CD4-positive, alpha-beta T cell (primary cell): ENCODE measurements at regions of chr17 and their contacts with region 1.

Region 1: DNA sequence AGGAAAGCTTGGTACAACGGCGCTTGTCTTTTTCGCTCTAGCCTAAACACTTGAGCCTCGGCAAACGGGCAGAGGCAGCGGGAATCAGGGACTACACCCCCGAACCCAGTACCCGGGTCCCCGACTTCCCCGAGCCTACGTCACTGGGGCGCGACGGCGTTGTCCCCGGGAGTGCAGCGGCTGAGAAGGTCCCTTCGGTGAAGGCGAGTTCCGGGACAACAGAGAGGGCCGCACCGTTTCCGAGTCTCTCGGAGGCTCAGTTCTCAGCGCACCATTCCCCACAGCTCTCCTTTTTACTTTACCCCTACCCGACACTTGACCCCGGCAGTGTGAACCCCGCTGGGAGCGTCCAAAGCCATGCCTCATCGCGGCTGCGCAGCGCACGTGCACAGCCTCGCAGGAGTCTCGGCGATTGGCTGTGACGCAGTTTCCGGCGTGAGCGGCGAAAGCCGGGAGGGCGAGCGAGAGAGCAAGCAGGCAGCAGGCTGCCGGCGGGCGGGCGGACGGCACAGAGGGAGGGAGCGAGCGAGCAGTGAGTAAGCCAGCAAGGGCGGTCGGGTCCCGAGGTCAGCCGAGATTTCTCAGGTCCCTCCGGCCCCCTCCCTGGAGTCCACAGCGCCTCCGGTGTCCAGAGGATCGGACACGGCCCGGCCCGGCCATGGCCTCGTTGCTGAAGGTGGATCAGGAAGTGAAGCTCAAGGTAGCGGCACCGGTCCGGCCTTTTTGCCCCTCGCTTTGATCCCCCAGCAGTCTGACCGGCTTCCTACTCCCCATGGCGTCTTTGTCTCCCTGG is at the start of gene PSME3:
- DNase-seq: peak; percentile 76 to 95 (median 86)
- ATAC-seq: peak; percentile 87
- H3K4me3 ChIP-seq: peak within 1 kb of the TSS; percentile 93
- H3K4me3 Mint-ChIP-seq: peak within 1 kb of the TSS; percentile 95
- H3K27ac ChIP-seq: peak within 1 kb of the TSS; percentile 86 to 88
- H3K27ac Mint-ChIP-seq: peak within 1 kb of the TSS; percentile 98
- H3K4me1 ChIP-seq: peaks cover 24% of the 10 kb centered on the region
- H3K4me1 Mint-ChIP-seq: peaks cover 27% of the 10 kb centered on the region
- H3K27me3 ChIP-seq: no peaks in the 10 kb centered on the region
- H3K27me3 Mint-ChIP-seq: no peaks in the 10 kb centered on the region
- CTCF ChIP-seq: no peak
- total RNA-seq, gene PSME3: 62.1 to 62.5 TPM

Region 2: DNA sequence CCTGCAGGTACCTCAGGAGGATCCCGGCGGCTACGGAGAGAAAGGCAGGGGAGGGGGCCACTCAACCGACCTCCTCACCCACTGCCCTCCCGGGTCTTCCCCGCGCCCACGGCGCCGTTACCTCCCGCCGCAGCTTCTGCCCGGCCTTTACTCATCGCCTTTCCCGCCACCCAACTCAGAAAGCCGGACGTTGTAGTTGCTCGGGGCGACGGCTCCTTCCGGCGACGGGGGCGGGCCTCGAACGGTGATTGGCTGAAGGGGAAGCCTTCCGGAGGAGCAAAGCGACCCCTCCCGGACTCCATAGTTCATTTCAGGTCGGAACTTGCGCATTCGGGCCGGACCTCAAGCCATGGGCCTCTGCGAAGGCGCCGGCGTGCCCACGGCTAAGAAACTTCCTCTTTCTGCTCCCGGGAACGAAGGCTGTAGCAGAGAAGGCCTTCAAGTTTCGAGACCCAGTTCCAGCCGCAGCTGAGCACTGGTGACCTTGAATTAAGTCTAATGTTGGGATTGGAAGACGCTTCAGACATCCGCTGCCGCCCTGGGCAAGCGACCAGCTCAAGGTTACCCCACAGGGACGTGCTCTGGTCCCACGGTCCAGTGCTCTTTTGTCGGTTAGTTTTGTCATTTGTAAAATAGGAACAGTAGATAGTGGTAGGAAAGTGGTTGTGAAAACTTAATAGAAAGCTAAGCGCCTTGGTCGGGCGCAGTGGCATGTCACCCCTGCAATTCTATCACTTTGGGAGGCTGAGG is 255.5 kb before region 1 on chr17 and contains the start of gene PSMC3IP:
- CTCF ChIA-PET with region 1: no interaction called
- POLR2A ChIA-PET with region 1: interaction called, 3 read pairs
- intact Hi-C with region 1: loop called in 1 of 2 experiments (anchors 5 kb)
- DNase-seq: peak; percentile 81 to 95 (median 90)
- ATAC-seq: peak; percentile 89
- H3K4me3 ChIP-seq: peak within 1 kb of the TSS; percentile 67
- H3K4me3 Mint-ChIP-seq: peak within 1 kb of the TSS; percentile 97
- H3K27ac ChIP-seq: peak within 1 kb of the TSS; percentile 49 to 67
- H3K27ac Mint-ChIP-seq: peak within 1 kb of the TSS; percentile 80
- H3K4me1 ChIP-seq: peaks cover 21% of the 10 kb centered on the region
- H3K4me1 Mint-ChIP-seq: peaks cover 32% of the 10 kb centered on the region
- H3K27me3 ChIP-seq: no peaks in the 10 kb centered on the region
- H3K27me3 Mint-ChIP-seq: no peaks in the 10 kb centered on the region
- CTCF ChIP-seq: peak; percentile 53
- total RNA-seq, gene PSMC3IP: 2.6 to 3.4 TPM

Region 3: DNA sequence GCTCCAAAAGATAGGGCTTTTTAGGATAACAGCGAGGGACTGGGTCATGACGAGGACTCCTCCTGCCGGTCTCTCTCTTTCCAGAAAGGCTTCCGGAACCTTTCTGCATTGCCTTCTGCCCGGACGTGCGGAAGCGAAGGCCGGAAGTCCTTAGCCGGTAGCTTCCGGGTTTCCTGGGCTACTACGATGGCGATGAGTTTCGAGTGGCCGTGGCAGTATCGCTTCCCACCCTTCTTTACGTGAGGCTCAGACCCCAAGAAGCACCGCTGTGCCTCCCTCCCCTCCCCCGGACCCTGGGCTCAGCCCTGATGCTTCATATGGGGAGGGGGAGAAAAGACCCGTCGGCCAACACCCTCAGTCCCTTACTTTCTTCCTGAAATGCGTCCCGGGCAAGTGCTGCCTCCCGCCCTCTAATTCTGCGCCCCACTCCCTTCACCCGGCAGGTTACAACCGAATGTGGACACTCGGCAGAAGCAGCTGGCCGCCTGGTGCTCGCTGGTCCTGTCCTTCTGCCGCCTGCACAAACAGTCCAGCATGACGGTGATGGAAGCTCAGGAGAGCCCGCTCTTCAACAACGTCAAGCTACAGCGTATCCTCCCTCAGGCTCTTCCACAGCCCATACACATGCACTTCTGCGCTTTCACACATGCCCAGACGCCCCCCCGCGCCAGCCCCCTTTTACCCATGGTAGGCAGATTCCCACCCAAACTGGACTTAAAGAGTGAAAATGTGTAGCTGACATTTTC is 59.7 kb before region 1 on chr17 and contains the start of gene VPS25:
- CTCF ChIA-PET with region 1: no interaction called
- POLR2A ChIA-PET with region 1: interaction called, 6 read pairs
- intact Hi-C with region 1: loop called in 1 of 2 experiments (anchors 2 kb)
- DNase-seq: peak; percentile 58 to 89 (median 71)
- ATAC-seq: peak; percentile 93
- H3K4me3 ChIP-seq: peak within 1 kb of the TSS; percentile 71
- H3K4me3 Mint-ChIP-seq: peak within 1 kb of the TSS; percentile 96
- H3K27ac ChIP-seq: peak within 1 kb of the TSS; percentile 68 to 76
- H3K27ac Mint-ChIP-seq: peak within 1 kb of the TSS; percentile 92
- H3K4me1 ChIP-seq: peaks cover 14% of the 10 kb centered on the region
- H3K4me1 Mint-ChIP-seq: peaks cover 34% of the 10 kb centered on the region
- H3K27me3 ChIP-seq: no peaks in the 10 kb centered on the region
- H3K27me3 Mint-ChIP-seq: peaks cover 3% of the 10 kb centered on the region
- CTCF ChIP-seq: no peak
- total RNA-seq, gene VPS25: 40.6 to 45.7 TPM

Region 4: GRCh38 chr17:42784811-42785592 is 48.2 kb before region 1 on chr17:
- CTCF ChIA-PET with region 1: no interaction called
- POLR2A ChIA-PET with region 1: no interaction called
- intact Hi-C with region 1: no loop called
- DNase-seq: peak in 1 of 14 experiments; percentile 31
- ATAC-seq: no peak
- H3K4me3 ChIP-seq: no peak overlapping the region
- H3K4me3 Mint-ChIP-seq: peak overlapping the region; percentile 48
- H3K27ac ChIP-seq: no peak overlapping the region
- H3K27ac Mint-ChIP-seq: no peak overlapping the region
- H3K4me1 ChIP-seq: peaks cover 27% of the 10 kb centered on the region
- H3K4me1 Mint-ChIP-seq: peaks cover 28% of the 10 kb centered on the region
- H3K27me3 ChIP-seq: peaks cover 59 to 70% of the 10 kb centered on the region in 2 experiments
- H3K27me3 Mint-ChIP-seq: peaks cover 65% of the 10 kb centered on the region
- CTCF ChIP-seq: no peak

Region 5: DNA sequence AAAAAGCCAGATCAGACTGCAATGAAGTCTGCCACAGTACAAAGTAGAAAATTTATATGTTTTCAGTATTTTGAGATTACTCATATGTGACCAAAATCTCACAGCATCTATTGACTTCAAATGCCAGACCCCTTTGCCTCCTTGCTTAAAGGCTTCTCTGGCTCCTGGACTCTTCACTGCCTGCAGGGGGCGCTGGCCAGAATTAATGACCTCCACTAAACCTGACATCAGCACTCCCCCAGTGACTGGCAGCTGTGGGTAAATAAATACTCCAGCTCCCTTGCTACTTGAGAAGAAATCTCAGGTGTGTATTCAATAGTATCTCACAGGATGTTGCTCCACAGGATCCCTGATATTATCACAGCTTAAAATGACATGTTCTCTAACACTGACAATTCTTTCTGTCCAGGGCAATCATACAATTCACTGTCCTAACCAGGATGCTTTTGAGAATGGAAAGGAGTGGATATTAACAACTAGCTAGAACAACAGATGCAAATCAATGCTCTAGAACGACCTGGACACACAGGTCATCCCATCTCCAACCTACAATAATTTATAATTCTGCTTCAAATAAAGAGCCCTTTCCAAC is 13.1 kb before region 1 on chr17:
- CTCF ChIA-PET with region 1: interaction called, 39 read pairs
- POLR2A ChIA-PET with region 1: interaction called, 50 read pairs
- intact Hi-C with region 1: loop called in 1 of 2 experiments (anchors 1 kb)
- DNase-seq: peak; percentile 29 to 79 (median 48)
- ATAC-seq: no peak
- H3K4me3 ChIP-seq: no peak overlapping the region
- H3K4me3 Mint-ChIP-seq: peak overlapping the region; percentile 43
- H3K27ac ChIP-seq: no peak overlapping the region
- H3K27ac Mint-ChIP-seq: peak overlapping the region; percentile 49
- H3K4me1 ChIP-seq: peaks cover 22% of the 10 kb centered on the region
- H3K4me1 Mint-ChIP-seq: peaks cover 28% of the 10 kb centered on the region
- H3K27me3 ChIP-seq: no peaks in the 10 kb centered on the region
- H3K27me3 Mint-ChIP-seq: no peaks in the 10 kb centered on the region
- CTCF ChIP-seq: peak; percentile 72

Region 6: DNA sequence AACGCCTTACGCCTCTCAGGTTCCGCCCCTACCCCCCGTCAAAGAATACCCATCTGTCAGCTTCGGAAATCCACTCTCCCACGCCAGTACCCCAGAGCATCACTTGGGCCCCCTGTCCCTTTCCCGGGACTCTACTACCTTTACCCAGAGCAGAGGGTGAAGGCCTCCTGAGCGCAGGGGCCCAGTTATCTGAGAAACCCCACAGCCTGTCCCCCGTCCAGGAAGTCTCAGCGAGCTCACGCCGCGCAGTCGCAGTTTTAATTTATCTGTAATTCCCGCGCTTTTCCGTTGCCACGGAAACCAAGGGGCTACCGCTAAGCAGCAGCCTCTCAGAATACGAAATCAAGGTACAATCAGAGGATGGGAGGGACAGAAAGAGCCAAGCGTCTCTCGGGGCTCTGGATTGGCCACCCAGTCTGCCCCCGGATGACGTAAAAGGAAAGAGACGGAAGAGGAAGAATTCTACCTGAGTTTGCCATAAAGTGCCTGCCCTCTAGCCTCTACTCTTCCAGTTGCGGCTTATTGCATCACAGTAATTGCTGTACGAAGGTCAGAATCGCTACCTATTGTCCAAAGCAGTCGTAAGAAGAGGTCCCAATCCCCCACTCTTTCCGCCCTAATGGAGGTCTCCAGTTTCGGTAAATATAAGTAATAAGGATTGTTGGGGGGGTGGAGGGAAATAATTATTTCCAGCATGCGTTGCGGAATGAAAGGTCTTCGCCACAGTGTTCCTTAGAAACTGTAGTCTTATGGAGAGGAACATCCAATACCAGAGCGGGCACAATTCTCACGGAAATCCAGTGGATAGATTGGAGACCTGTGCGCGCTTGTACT is 292.2 kb after region 1 on chr17 and contains the start of gene BRCA1:
- CTCF ChIA-PET with region 1: no interaction called
- POLR2A ChIA-PET with region 1: no interaction called
- intact Hi-C with region 1: loop called in 1 of 2 experiments (anchors 5 kb)
- DNase-seq: peak; percentile 86 to 99 (median 90)
- ATAC-seq: peak; percentile 99
- H3K4me3 ChIP-seq: peak within 1 kb of the TSS; percentile 77
- H3K4me3 Mint-ChIP-seq: peak within 1 kb of the TSS; percentile 86
- H3K27ac ChIP-seq: peak within 1 kb of the TSS; percentile 55 to 83
- H3K27ac Mint-ChIP-seq: peak within 1 kb of the TSS; percentile 71
- H3K4me1 ChIP-seq: peaks cover 18% of the 10 kb centered on the region
- H3K4me1 Mint-ChIP-seq: peaks cover 23% of the 10 kb centered on the region
- H3K27me3 ChIP-seq: no peaks in the 10 kb centered on the region
- H3K27me3 Mint-ChIP-seq: no peaks in the 10 kb centered on the region
- CTCF ChIP-seq: no peak
- total RNA-seq, gene BRCA1: 1.2 to 1.3 TPM